Mammary epithelial cell (primary cell): ENCODE measurements at regions of chr5 and their contacts with region 1.

Region 1: GRCh38 chr5:75053304-75054133 is 1.2 kb upstream of the GCNT4 start:
- DNase-seq: peak; percentile 92
- H3K4me3 ChIP-seq: peak overlapping the region; percentile 74 to 82 (median 75)
- H3K27ac ChIP-seq: peak overlapping the region; percentile 87
- H3K4me1 ChIP-seq: peaks cover 34% of the 10 kb centered on the region
- H3K27me3 ChIP-seq: no peaks in the 10 kb centered on the region
- CTCF ChIP-seq: peak in 1 of 2 donors; percentile 46

Region 2: DNA sequence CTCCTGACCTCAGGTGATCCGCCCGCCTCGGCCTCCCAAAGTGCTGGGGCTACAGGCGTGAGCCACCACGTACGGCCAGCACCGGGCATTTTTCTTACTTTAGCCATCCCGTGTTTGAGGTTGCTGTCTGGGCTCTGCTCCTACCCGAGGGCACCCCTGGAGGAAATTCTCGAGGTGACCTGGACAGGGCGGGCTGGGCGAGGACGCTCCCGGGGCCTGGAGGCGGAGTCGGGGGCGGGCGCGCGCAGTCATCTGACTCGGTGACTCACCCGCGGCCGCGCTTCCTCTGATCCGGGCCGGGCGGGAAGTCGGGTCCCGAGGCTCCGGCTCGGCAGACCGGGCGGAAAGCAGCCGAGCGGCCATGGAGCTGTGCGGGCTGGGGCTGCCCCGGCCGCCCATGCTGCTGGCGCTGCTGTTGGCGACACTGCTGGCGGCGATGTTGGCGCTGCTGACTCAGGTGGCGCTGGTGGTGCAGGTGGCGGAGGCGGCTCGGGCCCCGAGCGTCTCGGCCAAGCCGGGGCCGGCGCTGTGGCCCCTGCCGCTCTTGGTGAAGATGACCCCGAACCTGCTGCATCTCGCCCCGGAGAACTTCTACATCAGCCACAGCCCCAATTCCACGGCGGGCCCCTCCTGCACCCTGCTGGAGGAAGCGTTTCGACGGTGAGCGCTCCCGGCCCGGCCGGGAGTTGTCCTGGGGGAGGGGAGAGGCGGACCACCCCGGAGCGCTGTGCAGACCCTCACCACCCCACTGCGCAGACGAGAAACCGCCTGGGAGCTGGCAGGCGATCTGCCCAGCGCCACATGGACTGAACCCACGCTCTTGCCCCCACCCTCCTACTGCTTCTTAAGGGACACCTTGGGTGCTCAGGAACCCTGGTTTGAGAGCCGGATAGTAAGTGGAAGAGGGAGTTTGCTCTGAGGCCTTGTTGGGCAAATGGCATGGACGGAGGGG is 368.3 kb before region 1 on chr5 and contains the start of gene HEXB:
- CTCF ChIA-PET with region 1: interaction called, 3 read pairs
- dilution Hi-C with region 1: no loop called
- in situ Hi-C with region 1: no loop called
- intact Hi-C with region 1: loop called (anchors 10 kb)
- DNase-seq: peak; percentile 85
- H3K4me3 ChIP-seq: peak within 1 kb of the TSS; percentile 74 to 90 (median 88)
- H3K27ac ChIP-seq: peak within 1 kb of the TSS; percentile 74
- H3K4me1 ChIP-seq: peaks cover 17% of the 10 kb centered on the region
- H3K27me3 ChIP-seq: no peaks in the 10 kb centered on the region
- CTCF ChIP-seq: no peak
- total RNA-seq, gene HEXB: 101 to 122 TPM

Region 3: GRCh38 chr5:74927336-74927735 is 126.2 kb before region 1 on chr5:
- CTCF ChIA-PET with region 1: interaction called, 15 read pairs
- dilution Hi-C with region 1: no loop called
- in situ Hi-C with region 1: no loop called
- intact Hi-C with region 1: loop called (anchors 2 kb)
- DNase-seq: no peak
- H3K4me3 ChIP-seq: no peak overlapping the region
- H3K27ac ChIP-seq: no peak overlapping the region
- H3K4me1 ChIP-seq: no peaks in the 10 kb centered on the region
- H3K27me3 ChIP-seq: no peaks in the 10 kb centered on the region
- CTCF ChIP-seq: no peak

Region 4: GRCh38 chr5:74953940-74954720 is 99.4 kb before region 1 on chr5:
- CTCF ChIA-PET with region 1: no interaction called
- dilution Hi-C with region 1: no loop called
- in situ Hi-C with region 1: no loop called
- intact Hi-C with region 1: loop called (anchors 5 kb)
- DNase-seq: peak; percentile 35
- H3K4me3 ChIP-seq: no peak overlapping the region
- H3K27ac ChIP-seq: no peak overlapping the region
- H3K4me1 ChIP-seq: peaks cover 45% of the 10 kb centered on the region
- H3K27me3 ChIP-seq: no peaks in the 10 kb centered on the region
- CTCF ChIP-seq: no peak

Region 5: DNA sequence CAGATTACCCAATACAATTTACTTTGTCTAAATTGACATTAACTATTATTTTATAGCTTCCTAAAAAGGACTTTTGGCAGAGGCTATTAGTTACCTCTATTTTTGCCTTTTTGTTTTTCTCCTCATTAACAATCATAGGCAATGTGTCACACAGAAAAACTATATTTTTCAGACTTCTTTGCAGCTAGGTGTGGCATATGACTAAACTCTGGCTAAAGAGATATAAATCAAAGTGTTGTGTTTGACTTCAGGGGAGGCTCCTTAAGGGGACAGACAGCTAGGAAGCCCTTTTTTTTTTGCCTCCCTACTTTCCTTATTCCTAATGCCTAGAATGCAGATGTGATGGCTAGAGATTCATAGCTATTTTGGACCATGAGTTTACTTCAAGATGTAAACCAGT is 18.5 kb after region 1 on chr5:
- CTCF ChIA-PET with region 1: no interaction called
- dilution Hi-C with region 1: no loop called
- in situ Hi-C with region 1: no loop called
- intact Hi-C with region 1: no loop called
- DNase-seq: peak; percentile 35
- H3K4me3 ChIP-seq: no peak overlapping the region
- H3K27ac ChIP-seq: no peak overlapping the region
- H3K4me1 ChIP-seq: peaks cover 4% of the 10 kb centered on the region
- H3K27me3 ChIP-seq: no peaks in the 10 kb centered on the region
- CTCF ChIP-seq: no peak

Region 6: GRCh38 chr5:75236322-75237316 is 183.1 kb after region 1 on chr5 and contains the start of gene ANKRD31:
- CTCF ChIA-PET with region 1: interaction called, 3 read pairs
- dilution Hi-C with region 1: no loop called
- in situ Hi-C with region 1: no loop called
- intact Hi-C with region 1: loop called (anchors 1 kb)
- DNase-seq: peak; percentile 64
- H3K4me3 ChIP-seq: peak within 1 kb of the TSS; percentile 69 to 72 (median 71)
- H3K27ac ChIP-seq: no peak within 1 kb of the TSS
- H3K4me1 ChIP-seq: peaks cover 29% of the 10 kb centered on the region
- H3K27me3 ChIP-seq: no peaks in the 10 kb centered on the region
- CTCF ChIP-seq: peak; percentile 53 to 62
- total RNA-seq, gene ANKRD31: 0.26 to 0.33 TPM

Region 7: DNA sequence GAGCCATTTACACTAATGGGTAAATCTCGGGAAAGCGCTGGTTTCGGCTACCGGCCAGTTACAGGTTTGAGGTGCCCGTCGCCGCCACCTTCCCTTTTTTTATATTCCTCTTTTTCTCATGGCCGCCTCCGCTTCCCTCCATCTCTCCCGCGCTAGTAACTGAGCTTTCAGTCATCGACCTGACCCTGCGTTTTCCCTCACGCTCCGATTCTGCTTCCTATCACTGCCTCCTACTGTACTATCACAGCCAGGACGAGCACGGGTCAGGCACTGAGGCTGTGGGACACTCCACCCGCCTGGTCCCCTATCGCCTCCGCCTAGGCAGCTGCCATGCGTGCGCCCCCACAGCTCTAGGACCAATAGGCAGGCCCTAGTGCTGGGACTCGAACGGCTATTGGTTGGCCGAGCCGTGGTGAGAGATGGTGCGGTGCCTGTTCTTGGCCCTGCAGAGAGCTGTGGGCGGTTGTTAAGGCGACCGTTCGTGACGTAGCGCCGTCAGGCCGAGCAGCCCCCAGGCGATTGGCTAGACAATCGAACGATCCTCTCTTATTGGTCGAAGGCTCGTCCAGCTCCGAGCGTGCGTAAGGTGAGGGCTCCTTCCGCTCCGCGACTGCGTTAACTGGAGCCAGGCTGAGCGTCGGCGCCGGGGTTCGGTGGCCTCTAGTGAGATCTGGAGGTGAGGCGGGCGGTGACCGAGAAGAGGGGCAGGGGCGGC is 283.3 kb after region 1 on chr5 and contains the start of gene HMGCR:
- CTCF ChIA-PET with region 1: no interaction called
- dilution Hi-C with region 1: no loop called
- in situ Hi-C with region 1: no loop called
- intact Hi-C with region 1: loop called (anchors 5 kb)
- DNase-seq: peak; percentile 100
- H3K4me3 ChIP-seq: peak within 1 kb of the TSS; percentile 72 to 96 (median 84)
- H3K27ac ChIP-seq: peak within 1 kb of the TSS; percentile 93
- H3K4me1 ChIP-seq: peaks cover 35% of the 10 kb centered on the region
- H3K27me3 ChIP-seq: no peaks in the 10 kb centered on the region
- CTCF ChIP-seq: peak; percentile 24 to 51
- total RNA-seq, gene HMGCR: 106 to 142 TPM

Region 8: GRCh38 chr5:75473463-75473862 is 419.9 kb after region 1 on chr5:
- CTCF ChIA-PET with region 1: no interaction called
- dilution Hi-C with region 1: no loop called
- in situ Hi-C with region 1: no loop called
- intact Hi-C with region 1: no loop called
- DNase-seq: no peak
- H3K4me3 ChIP-seq: no peak overlapping the region
- H3K27ac ChIP-seq: no peak overlapping the region
- H3K4me1 ChIP-seq: no peaks in the 10 kb centered on the region
- H3K27me3 ChIP-seq: no peaks in the 10 kb centered on the region
- CTCF ChIP-seq: no peak